T-cell (primary cell): ENCODE measurements at regions of chr9 and their contacts with region 1.

Region 1: GRCh38 chr9:36078051-36078450 is 41.3 kb downstream of the RECK start:
- DNase-seq: no peak
- ATAC-seq: no peak
- H3K4me3 ChIP-seq: no peak overlapping the region
- H3K4me3 Mint-ChIP-seq: no peak overlapping the region
- H3K27ac ChIP-seq: no peak overlapping the region
- H3K27ac Mint-ChIP-seq: no peak overlapping the region
- H3K4me1 ChIP-seq: no peaks in the 10 kb centered on the region
- H3K4me1 Mint-ChIP-seq: no peaks in the 10 kb centered on the region
- H3K27me3 ChIP-seq: no peaks in the 10 kb centered on the region
- H3K27me3 Mint-ChIP-seq: no peaks in the 10 kb centered on the region

Region 2: DNA sequence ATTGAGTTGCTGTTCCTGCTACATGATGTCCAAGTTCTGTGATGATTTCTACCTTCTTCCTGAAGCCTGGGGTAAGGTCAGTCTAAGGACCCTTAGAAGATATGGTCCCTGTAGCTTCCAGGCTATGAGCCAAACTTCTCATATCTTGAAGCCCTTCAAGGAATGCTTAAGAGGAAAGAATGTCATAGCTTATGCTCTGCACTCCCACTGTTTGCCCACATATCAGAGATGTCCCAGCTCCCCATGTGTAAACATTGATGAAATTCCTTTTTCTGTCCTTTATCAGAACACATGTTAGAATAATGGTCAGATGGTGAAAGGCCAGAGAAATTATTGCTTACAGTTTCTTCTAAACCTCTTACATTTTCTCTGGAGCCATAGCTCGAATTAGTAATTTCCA is 629.6 kb before region 1 on chr9:
- CTCF ChIA-PET with region 1: no interaction called
- POLR2A ChIA-PET with region 1: interaction called in 1 of 2 experiments, 11 read pairs
- DNase-seq: no peak
- ATAC-seq: no peak
- H3K4me3 ChIP-seq: no peak overlapping the region
- H3K4me3 Mint-ChIP-seq: no peak overlapping the region
- H3K27ac ChIP-seq: no peak overlapping the region
- H3K27ac Mint-ChIP-seq: no peak overlapping the region
- H3K4me1 ChIP-seq: no peaks in the 10 kb centered on the region
- H3K4me1 Mint-ChIP-seq: no peaks in the 10 kb centered on the region
- H3K27me3 ChIP-seq: peaks cover 0 to 10% of the 10 kb centered on the region in 2 experiments
- H3K27me3 Mint-ChIP-seq: peaks cover 49 to 50% of the 10 kb centered on the region in 2 donors

Region 3: GRCh38 chr9:36140051-36140737 is 62.1 kb after region 1 on chr9:
- CTCF ChIA-PET with region 1: no interaction called
- POLR2A ChIA-PET with region 1: interaction called in 1 of 2 experiments, 11 read pairs
- DNase-seq: peak in 10 of 35 experiments; percentile 12 to 54 (median 28)
- ATAC-seq: peak in 1 of 4 experiments; percentile 21
- H3K4me3 ChIP-seq: no peak overlapping the region
- H3K4me3 Mint-ChIP-seq: peak overlapping the region; percentile 53 to 88 (median 60)
- H3K27ac ChIP-seq: peak overlapping the region; percentile 91
- H3K27ac Mint-ChIP-seq: peak overlapping the region; percentile 89 to 99
- H3K4me1 ChIP-seq: peaks cover 64 to 91% of the 10 kb centered on the region in 2 experiments
- H3K4me1 Mint-ChIP-seq: peaks cover 83 to 90% (median 83%) of the 10 kb centered on the region in 3 donors
- H3K27me3 ChIP-seq: peaks cover 0 to 5% of the 10 kb centered on the region in 2 experiments
- H3K27me3 Mint-ChIP-seq: no peaks in the 10 kb centered on the region